GM12878 (cell line): ENCODE measurements at regions of chr11 and their contacts with region 1.

Region 1: GRCh38 chr11:99534812-99535211 is 514.1 kb downstream of the CNTN5 start:
- DNase-seq: no peak
- ATAC-seq: peak; percentile 74
- H3K4me3 ChIP-seq: no peak overlapping the region
- H3K27ac ChIP-seq: no peak overlapping the region
- H3K4me1 ChIP-seq: no peaks in the 10 kb centered on the region
- H3K27me3 ChIP-seq: no peaks in the 10 kb centered on the region
- CTCF ChIP-seq: no peak
- EP300 ChIP-seq: no peak
- POLR2A ChIP-seq: no peak
- RAD21 ChIP-seq: no peak

Region 2: GRCh38 chr11:99505316-99505715 is 29.5 kb before region 1 on chr11:
- CTCF ChIA-PET with region 1: no interaction called
- POLR2A ChIA-PET with region 1: no interaction called
- RAD21 ChIA-PET with region 1: no interaction called
- SMC1A ChIA-PET with region 1: no interaction called
- in situ Hi-C with region 1: no loop called
- intact Hi-C with region 1: no loop called
- DNase-seq: no peak
- ATAC-seq: no peak
- H3K4me3 ChIP-seq: no peak overlapping the region
- H3K27ac ChIP-seq: no peak overlapping the region
- H3K4me1 ChIP-seq: no peaks in the 10 kb centered on the region
- H3K27me3 ChIP-seq: no peaks in the 10 kb centered on the region
- CTCF ChIP-seq: no peak
- EP300 ChIP-seq: no peak
- POLR2A ChIP-seq: no peak
- RAD21 ChIP-seq: no peak

Region 3: DNA sequence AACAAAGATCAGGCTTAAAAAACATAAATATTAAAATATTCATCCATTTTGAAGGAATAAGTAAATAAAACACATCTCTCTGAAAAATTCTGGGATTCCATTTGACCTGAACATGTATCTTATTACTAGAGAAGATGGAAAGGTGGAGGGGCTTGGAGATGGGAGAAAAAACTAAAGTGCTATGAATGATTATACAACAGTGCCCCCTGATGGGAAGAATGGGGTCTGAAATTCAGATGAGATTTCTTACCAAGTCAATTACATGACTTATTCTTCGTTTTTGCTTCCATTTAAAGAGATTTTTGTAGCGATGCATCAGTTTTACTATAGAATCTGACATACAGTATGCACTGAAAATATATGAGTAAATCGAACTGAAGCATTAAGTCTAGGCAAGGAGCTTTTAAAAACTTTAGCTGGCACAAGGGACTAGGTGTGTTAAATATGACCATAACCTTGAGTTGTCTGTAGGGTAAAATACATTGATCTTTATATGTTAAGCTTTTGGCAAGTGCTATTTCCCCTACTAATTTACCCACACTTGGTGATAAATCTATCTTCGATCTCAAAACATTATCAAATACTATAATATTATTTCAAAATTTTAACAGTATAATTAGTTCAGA is 204.8 kb after region 1 on chr11:
- CTCF ChIA-PET with region 1: no interaction called
- POLR2A ChIA-PET with region 1: no interaction called
- RAD21 ChIA-PET with region 1: no interaction called
- SMC1A ChIA-PET with region 1: no interaction called
- in situ Hi-C with region 1: no loop called
- intact Hi-C with region 1: loop called (anchors 10 kb)
- DNase-seq: no peak
- ATAC-seq: peak; percentile 47; the same call in 1 of the 3 replicates
- H3K4me3 ChIP-seq: no peak overlapping the region
- H3K27ac ChIP-seq: no peak overlapping the region
- H3K4me1 ChIP-seq: no peaks in the 10 kb centered on the region
- H3K27me3 ChIP-seq: no peaks in the 10 kb centered on the region
- CTCF ChIP-seq: peak; percentile 29 to 51 (median 50); a peak in 5 of 6 replicates
- EP300 ChIP-seq: no peak
- POLR2A ChIP-seq: no peak
- RAD21 ChIP-seq: peak; percentile 72

Region 4: GRCh38 chr11:100105982-100106358 is 571.2 kb after region 1 on chr11:
- CTCF ChIA-PET with region 1: no interaction called
- POLR2A ChIA-PET with region 1: no interaction called
- RAD21 ChIA-PET with region 1: no interaction called
- SMC1A ChIA-PET with region 1: no interaction called
- in situ Hi-C with region 1: no loop called
- intact Hi-C with region 1: no loop called
- DNase-seq: no peak
- ATAC-seq: no peak
- H3K4me3 ChIP-seq: no peak overlapping the region
- H3K27ac ChIP-seq: no peak overlapping the region
- H3K4me1 ChIP-seq: no peaks in the 10 kb centered on the region
- H3K27me3 ChIP-seq: no peaks in the 10 kb centered on the region
- CTCF ChIP-seq: no peak
- EP300 ChIP-seq: no peak
- POLR2A ChIP-seq: no peak
- RAD21 ChIP-seq: no peak